A549 (cell line): ENCODE measurements at regions of chr15 and their contacts with region 1.

Region 1: GRCh38 chr15:41972253-41973242 is at the start of gene EHD4:
- DNase-seq: peak; percentile 95 to 98
- ATAC-seq: peak; percentile 96 to 97
- H3K4me3 ChIP-seq: peak within 1 kb of the TSS; percentile 60
- H3K27ac ChIP-seq: peak within 1 kb of the TSS; percentile 82 to 95
- H3K4me1 ChIP-seq: peaks cover 13% of the 10 kb centered on the region; the same call in 1 of the 3 replicates
- CTCF ChIP-seq: peak; percentile 22; the same call in 1 of the 3 replicates
- EP300 ChIP-seq: no peak
- POLR2A ChIP-seq: peak; percentile 68
- RAD21 ChIP-seq: peak; percentile 24 to 35
- polyA plus RNA-seq, gene EHD4: 9.0 and 9.3 TPM in 2 replicates

Region 2: GRCh38 chr15:41930221-41930866 is 42.2 kb before region 1 on chr15:
- CTCF ChIA-PET with region 1: interaction called, 10 read pairs
- POLR2A ChIA-PET with region 1: interaction called, 6 read pairs
- DNase-seq: peak; percentile 85 to 92
- ATAC-seq: peak; percentile 77 to 88
- H3K4me3 ChIP-seq: 0 out of 3 replicates have a peak overlapping the region, but pooled peaks have one; percentile 4
- H3K27ac ChIP-seq: peak overlapping the region; percentile 70 to 78
- H3K4me1 ChIP-seq: peaks cover 85% of the 10 kb centered on the region
- CTCF ChIP-seq: peak; percentile 36
- EP300 ChIP-seq: peak; percentile 29 to 74; a peak in 3 of 5 replicates
- POLR2A ChIP-seq: no peak
- RAD21 ChIP-seq: peak; percentile 53 to 56